Activated B cell treated with CpG ODN at 0.5 μM for 24 hours (primary cell): ENCODE measurements at regions of chr1 and their contacts with region 1.

Region 1: GRCh38 chr1:211323156-211324063 is 3.2 kb upstream of the TRAF5 start:
- DNase-seq: no peak
- ATAC-seq: peak; percentile 62
- H3K4me3 Mint-ChIP-seq: no peak overlapping the region
- H3K27ac Mint-ChIP-seq: no peak overlapping the region
- H3K4me1 Mint-ChIP-seq: peaks cover 41% of the 10 kb centered on the region
- H3K27me3 Mint-ChIP-seq: no peaks in the 10 kb centered on the region
- CTCF ChIP-seq: peak; percentile 19

Region 2: GRCh38 chr1:210407207-210407886 is 916.1 kb before region 1 on chr1:
- CTCF ChIA-PET with region 1: no interaction called
- POLR2A ChIA-PET with region 1: no interaction called
- intact Hi-C with region 1: loop called (anchors 5 kb)
- DNase-seq: peak; percentile 62
- ATAC-seq: peak; percentile 68
- H3K4me3 Mint-ChIP-seq: no peak overlapping the region
- H3K27ac Mint-ChIP-seq: no peak overlapping the region
- H3K4me1 Mint-ChIP-seq: peaks cover 4% of the 10 kb centered on the region
- H3K27me3 Mint-ChIP-seq: no peaks in the 10 kb centered on the region
- CTCF ChIP-seq: peak; percentile 98

Region 3: DNA sequence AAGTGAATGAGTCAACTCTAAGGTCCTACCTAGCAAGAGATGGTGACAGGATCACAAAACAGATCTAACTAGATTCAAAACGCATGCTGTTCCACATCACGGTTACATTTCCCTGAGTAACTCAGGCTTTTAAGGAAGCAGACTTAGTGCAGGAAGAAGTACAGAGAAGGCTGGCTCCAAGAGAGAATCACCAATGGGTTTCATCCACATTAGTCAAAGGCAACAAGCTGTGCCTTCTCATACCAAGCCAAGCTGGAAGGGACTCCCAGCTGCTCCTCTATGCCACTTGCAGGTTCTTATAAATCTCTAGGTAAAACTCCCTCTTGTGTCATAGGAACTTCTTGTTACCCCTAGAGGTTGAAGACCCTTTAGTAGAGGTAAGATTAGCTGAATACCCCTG is 298.5 kb before region 1 on chr1:
- CTCF ChIA-PET with region 1: no interaction called
- POLR2A ChIA-PET with region 1: no interaction called
- intact Hi-C with region 1: no loop called
- DNase-seq: no peak
- ATAC-seq: no peak
- H3K4me3 Mint-ChIP-seq: no peak overlapping the region
- H3K27ac Mint-ChIP-seq: no peak overlapping the region
- H3K4me1 Mint-ChIP-seq: no peaks in the 10 kb centered on the region
- H3K27me3 Mint-ChIP-seq: peaks cover 10% of the 10 kb centered on the region
- CTCF ChIP-seq: no peak

Region 4: GRCh38 chr1:211347077-211347844 is 23.9 kb after region 1 on chr1:
- CTCF ChIA-PET with region 1: interaction called, 26 read pairs
- POLR2A ChIA-PET with region 1: interaction called, 6 read pairs
- intact Hi-C with region 1: no loop called
- DNase-seq: no peak
- ATAC-seq: no peak
- H3K4me3 Mint-ChIP-seq: no peak overlapping the region
- H3K27ac Mint-ChIP-seq: peak overlapping the region; percentile 30
- H3K4me1 Mint-ChIP-seq: peaks cover 87% of the 10 kb centered on the region
- H3K27me3 Mint-ChIP-seq: no peaks in the 10 kb centered on the region
- CTCF ChIP-seq: no peak

Region 5: DNA sequence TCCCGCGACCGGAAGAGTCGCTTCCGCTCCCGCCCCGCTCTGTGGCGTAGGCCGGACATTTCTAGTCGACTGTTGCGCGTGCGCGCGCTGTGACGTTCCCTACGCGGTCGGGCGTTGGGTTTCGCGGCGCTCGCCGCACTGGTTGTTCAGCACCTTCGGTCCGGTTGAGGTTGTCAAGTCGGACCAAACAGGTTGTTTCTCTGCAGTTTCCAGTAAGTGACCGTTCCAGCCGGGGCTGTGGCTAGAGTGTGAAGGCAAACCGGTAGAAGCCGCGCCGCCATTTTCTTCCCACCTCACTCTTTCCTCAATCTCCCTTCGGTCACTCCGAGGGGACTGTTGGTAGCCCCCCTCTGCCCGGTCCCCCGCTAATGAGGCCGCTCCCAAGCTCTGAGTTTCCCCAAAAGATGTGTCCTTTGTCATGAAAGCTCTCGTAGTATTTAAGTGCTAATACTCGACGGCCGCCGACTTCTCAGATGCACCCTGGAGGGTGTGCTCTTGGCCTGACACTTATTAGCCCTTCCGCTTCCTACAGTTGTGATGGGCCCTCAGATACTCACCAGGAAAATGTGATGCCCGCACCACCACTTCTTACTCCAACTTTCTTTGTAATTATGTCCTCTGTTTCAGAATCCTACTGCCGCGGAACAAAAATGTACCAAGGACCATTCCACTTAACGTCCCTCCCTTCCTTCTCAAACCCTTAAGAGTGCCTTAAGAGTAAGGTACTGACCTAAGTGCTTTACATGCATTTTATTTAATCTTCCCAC is 59.5 kb after region 1 on chr1:
- CTCF ChIA-PET with region 1: interaction called, 8 read pairs
- POLR2A ChIA-PET with region 1: interaction called, 47 read pairs
- intact Hi-C with region 1: loop called (anchors 5 kb)
- DNase-seq: peak; percentile 86
- ATAC-seq: peak; percentile 96
- H3K4me3 Mint-ChIP-seq: peak overlapping the region; percentile 93
- H3K27ac Mint-ChIP-seq: peak overlapping the region; percentile 98
- H3K4me1 Mint-ChIP-seq: peaks cover 20% of the 10 kb centered on the region
- H3K27me3 Mint-ChIP-seq: no peaks in the 10 kb centered on the region
- CTCF ChIP-seq: no peak

Region 6: GRCh38 chr1:211469938-211470529 is 146.6 kb after region 1 on chr1:
- CTCF ChIA-PET with region 1: interaction called, 10 read pairs
- POLR2A ChIA-PET with region 1: no interaction called
- intact Hi-C with region 1: no loop called
- DNase-seq: peak; percentile 38
- ATAC-seq: no peak
- H3K4me3 Mint-ChIP-seq: no peak overlapping the region
- H3K27ac Mint-ChIP-seq: no peak overlapping the region
- H3K4me1 Mint-ChIP-seq: peaks cover 4% of the 10 kb centered on the region
- H3K27me3 Mint-ChIP-seq: no peaks in the 10 kb centered on the region
- CTCF ChIP-seq: peak; percentile 15

Region 7: DNA sequence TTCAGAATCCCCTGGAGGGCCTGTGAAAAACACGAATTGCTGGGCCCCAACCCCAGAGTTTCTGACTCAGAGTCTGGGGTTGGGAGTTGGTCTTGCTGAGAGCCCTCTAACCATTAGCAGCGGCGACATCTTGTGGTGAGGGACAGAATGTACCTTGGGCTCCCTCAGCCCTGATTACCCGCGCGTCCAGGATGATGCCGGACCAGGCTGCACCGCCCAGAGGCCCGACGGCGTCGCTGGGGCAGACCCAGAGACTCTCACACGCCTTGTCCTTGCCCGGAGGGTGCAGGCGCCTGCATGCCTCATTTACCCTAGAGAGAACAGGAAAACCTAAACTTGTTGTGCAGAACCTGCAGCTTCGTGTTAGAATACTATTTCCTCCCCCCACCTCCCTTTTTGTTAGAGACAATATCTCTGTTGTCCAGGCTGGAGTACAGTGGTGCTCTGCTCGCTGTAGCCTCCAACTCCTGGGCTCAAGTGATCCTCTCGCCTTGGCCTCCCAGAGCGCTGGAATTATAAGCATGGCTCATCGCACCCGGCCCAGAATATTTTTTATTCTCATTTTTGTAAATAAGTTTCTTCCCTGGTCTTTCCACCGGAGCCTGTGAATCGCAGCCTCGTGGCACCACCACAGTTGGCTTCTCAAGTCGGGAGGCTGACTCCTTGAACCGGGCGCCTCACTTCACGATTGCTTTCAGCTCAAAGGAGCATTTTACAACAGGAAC is 190.8 kb after region 1 on chr1:
- CTCF ChIA-PET with region 1: interaction called, 31 read pairs
- POLR2A ChIA-PET with region 1: interaction called, 7 read pairs
- intact Hi-C with region 1: loop called (anchors 1 kb)
- DNase-seq: peak; percentile 59
- ATAC-seq: peak; percentile 71
- H3K4me3 Mint-ChIP-seq: peak overlapping the region; percentile 78
- H3K27ac Mint-ChIP-seq: peak overlapping the region; percentile 51
- H3K4me1 Mint-ChIP-seq: peaks cover 43% of the 10 kb centered on the region
- H3K27me3 Mint-ChIP-seq: peaks cover 6% of the 10 kb centered on the region
- CTCF ChIP-seq: no peak